H1 (cell line): ENCODE measurements at regions of chr6 and their contacts with region 1.

Region 1: GRCh38 chr6:147005499-147005898 is 198.7 kb upstream of the STXBP5 start:
- DNase-seq: no peak
- H3K4me3 ChIP-seq: no peak overlapping the region
- H3K27ac ChIP-seq: no peak overlapping the region
- H3K4me1 ChIP-seq: peaks cover 0 to 3% (median 0%) of the 10 kb centered on the region in 4 experiments; a peak in 1 of 7 replicates
- H3K27me3 ChIP-seq: no peaks in the 10 kb centered on the region
- CTCF ChIP-seq: peak in 2 of 3 experiments; percentile 32 to 57; a peak in 3 of 4 replicates
- EP300 ChIP-seq: no peak
- POLR2A ChIP-seq: no peak
- RAD21 ChIP-seq: peak in 1 of 2 experiments; percentile 42; a peak in 2 of 4 replicates

Region 2: DNA sequence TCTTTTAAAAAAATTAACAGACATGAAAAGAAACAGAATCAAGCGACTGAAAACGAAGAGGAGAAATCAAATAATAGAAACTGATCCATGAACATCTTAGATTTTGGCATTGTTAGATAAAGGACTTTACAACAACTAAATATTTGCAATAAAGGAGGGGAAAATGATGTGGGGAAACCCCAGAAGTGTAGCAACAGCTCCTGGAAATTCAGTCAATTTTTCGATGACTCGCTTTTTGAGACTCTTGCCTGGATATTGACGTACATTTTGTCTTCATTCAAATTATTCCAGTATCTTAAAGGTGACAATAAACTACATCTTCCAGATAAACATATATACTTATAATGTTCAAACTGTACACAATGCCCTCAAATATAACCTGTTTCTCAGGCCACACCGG is 362.6 kb before region 1 on chr6:
- CTCF ChIA-PET with region 1: no interaction called
- POLR2A ChIA-PET with region 1: no interaction called
- DNase-seq: no peak
- H3K4me3 ChIP-seq: no peak overlapping the region
- H3K27ac ChIP-seq: no peak overlapping the region
- H3K4me1 ChIP-seq: no peaks in the 10 kb centered on the region
- H3K27me3 ChIP-seq: peaks cover 0 to 2% (median 0%) of the 10 kb centered on the region in 4 experiments; a peak in 1 of 7 replicates
- CTCF ChIP-seq: no peak
- EP300 ChIP-seq: no peak
- POLR2A ChIP-seq: no peak
- RAD21 ChIP-seq: no peak

Region 3: GRCh38 chr6:147016440-147016839 is 10.9 kb after region 1 on chr6:
- CTCF ChIA-PET with region 1: interaction called, 15 read pairs
- POLR2A ChIA-PET with region 1: interaction called, 4 read pairs
- DNase-seq: no peak
- H3K4me3 ChIP-seq: no peak overlapping the region
- H3K27ac ChIP-seq: no peak overlapping the region
- H3K4me1 ChIP-seq: no peaks in the 10 kb centered on the region
- H3K27me3 ChIP-seq: no peaks in the 10 kb centered on the region
- CTCF ChIP-seq: no peak
- EP300 ChIP-seq: no peak
- POLR2A ChIP-seq: no peak
- RAD21 ChIP-seq: no peak

Region 4: DNA sequence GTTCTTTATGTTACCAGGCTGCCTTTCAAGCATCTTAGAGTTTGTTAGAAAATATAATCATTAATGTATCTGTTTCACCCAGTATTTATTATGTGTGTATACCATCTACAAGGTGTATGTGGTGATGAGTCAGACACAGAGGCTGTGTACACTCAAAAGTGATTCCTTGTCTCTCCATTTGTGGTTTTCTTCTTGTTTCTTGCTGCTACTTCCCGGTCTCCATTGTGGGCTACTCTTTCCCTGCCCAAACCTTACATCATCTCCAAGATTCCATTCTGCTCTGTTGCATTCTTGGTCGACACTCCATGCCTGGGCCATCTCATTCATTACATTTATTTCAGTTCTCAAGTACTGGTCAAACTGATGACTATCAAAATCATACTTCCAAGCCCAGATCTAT is 16.5 kb after region 1 on chr6:
- CTCF ChIA-PET with region 1: interaction called, 15 read pairs
- POLR2A ChIA-PET with region 1: no interaction called
- DNase-seq: no peak
- H3K4me3 ChIP-seq: no peak overlapping the region
- H3K27ac ChIP-seq: no peak overlapping the region
- H3K4me1 ChIP-seq: no peaks in the 10 kb centered on the region
- H3K27me3 ChIP-seq: no peaks in the 10 kb centered on the region
- CTCF ChIP-seq: no peak
- EP300 ChIP-seq: no peak
- POLR2A ChIP-seq: no peak
- RAD21 ChIP-seq: no peak